Natural killer cell (primary cell): ENCODE measurements at regions of chr19 and their contacts with region 1.

Region 1: GRCh38 chr19:52853880-52854279 is 3.5 kb downstream of the ZNF468 start:
- DNase-seq: no peak
- ATAC-seq: no peak
- H3K4me3 ChIP-seq: no peak overlapping the region
- H3K4me3 Mint-ChIP-seq: no peak overlapping the region
- H3K27ac ChIP-seq: no peak overlapping the region
- H3K27ac Mint-ChIP-seq: no peak overlapping the region
- H3K4me1 ChIP-seq: peaks cover 18% of the 10 kb centered on the region
- H3K4me1 Mint-ChIP-seq: peaks cover 29 to 32% of the 10 kb centered on the region in 2 donors
- H3K27me3 ChIP-seq: no peaks in the 10 kb centered on the region
- H3K27me3 Mint-ChIP-seq: no peaks in the 10 kb centered on the region
- CTCF ChIP-seq: no peak

Region 2: GRCh38 chr19:52734893-52735661 is 118.8 kb before region 1 on chr19 and contains the start of gene ZNF611:
- intact Hi-C with region 1: loop called (anchors 2 kb)
- DNase-seq: peak; percentile 99 to 100
- ATAC-seq: peak; percentile 95 to 99 (median 98)
- H3K4me3 ChIP-seq: peak within 1 kb of the TSS; percentile 92
- H3K4me3 Mint-ChIP-seq: peak within 1 kb of the TSS; percentile 91
- H3K27ac ChIP-seq: peak within 1 kb of the TSS; percentile 88
- H3K27ac Mint-ChIP-seq: peak within 1 kb of the TSS; percentile 68 to 81
- H3K4me1 ChIP-seq: peaks cover 21% of the 10 kb centered on the region
- H3K4me1 Mint-ChIP-seq: peaks cover 21 to 22% of the 10 kb centered on the region in 2 donors
- H3K27me3 ChIP-seq: no peaks in the 10 kb centered on the region
- H3K27me3 Mint-ChIP-seq: no peaks in the 10 kb centered on the region
- CTCF ChIP-seq: peak; percentile 68
- total RNA-seq, gene ZNF611: 41.2 to 58.0 (median 44.2) TPM

Region 3: GRCh38 chr19:52786457-52787359 is 67.2 kb before region 1 on chr19 and contains the start of gene ZNF600:
- intact Hi-C with region 1: loop called (anchors 10 kb)
- DNase-seq: peak; percentile 81
- ATAC-seq: peak; percentile 97 to 98 (median 97)
- H3K4me3 ChIP-seq: peak within 1 kb of the TSS; percentile 88
- H3K4me3 Mint-ChIP-seq: peak within 1 kb of the TSS; percentile 92
- H3K27ac ChIP-seq: peak within 1 kb of the TSS; percentile 70
- H3K27ac Mint-ChIP-seq: peak within 1 kb of the TSS; percentile 57 to 88
- H3K4me1 ChIP-seq: peaks cover 50% of the 10 kb centered on the region
- H3K4me1 Mint-ChIP-seq: peaks cover 53 to 58% of the 10 kb centered on the region in 2 donors
- H3K27me3 ChIP-seq: no peaks in the 10 kb centered on the region
- H3K27me3 Mint-ChIP-seq: no peaks in the 10 kb centered on the region
- CTCF ChIP-seq: no peak
- total RNA-seq, gene ZNF600: 28.8 to 157 (median 73.1) TPM

Region 4: DNA sequence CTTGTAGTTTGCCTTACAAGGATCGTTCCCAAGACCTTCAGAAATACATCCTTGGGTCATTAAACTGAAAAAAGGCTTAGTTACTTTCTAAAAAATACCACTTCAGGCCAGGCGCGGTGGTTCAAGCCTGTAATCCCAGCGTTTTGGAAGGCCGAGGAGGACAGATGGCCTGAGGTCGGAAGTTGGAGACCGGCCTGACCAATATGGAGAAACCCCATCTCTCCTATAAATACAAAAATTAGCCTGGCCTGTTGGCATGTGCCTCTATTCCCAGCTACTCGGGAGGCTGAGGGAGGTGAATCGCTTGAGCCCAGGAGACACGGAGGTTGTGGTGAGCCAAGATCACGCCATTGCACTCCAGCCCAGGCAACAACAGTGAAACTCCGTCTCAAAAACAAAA is 30.2 kb before region 1 on chr19:
- intact Hi-C with region 1: loop called (anchors 1 kb)
- DNase-seq: no peak
- ATAC-seq: no peak
- H3K4me3 ChIP-seq: no peak overlapping the region
- H3K4me3 Mint-ChIP-seq: no peak overlapping the region
- H3K27ac ChIP-seq: no peak overlapping the region
- H3K27ac Mint-ChIP-seq: no peak overlapping the region
- H3K4me1 ChIP-seq: peaks cover 7% of the 10 kb centered on the region
- H3K4me1 Mint-ChIP-seq: peaks cover 13 to 17% of the 10 kb centered on the region in 2 donors
- H3K27me3 ChIP-seq: no peaks in the 10 kb centered on the region
- H3K27me3 Mint-ChIP-seq: no peaks in the 10 kb centered on the region
- CTCF ChIP-seq: no peak

Region 5: GRCh38 chr19:52897144-52897935 is 43.5 kb after region 1 on chr19 and contains the start of gene ZNF320:
- intact Hi-C with region 1: loop called (anchors 1 kb)
- DNase-seq: peak; percentile 94 to 95
- ATAC-seq: peak; percentile 99 to 100 (median 100)
- H3K4me3 ChIP-seq: peak within 1 kb of the TSS; percentile 80
- H3K4me3 Mint-ChIP-seq: peak within 1 kb of the TSS; percentile 93
- H3K27ac ChIP-seq: peak within 1 kb of the TSS; percentile 74
- H3K27ac Mint-ChIP-seq: peak within 1 kb of the TSS; percentile 85 to 90
- H3K4me1 ChIP-seq: peaks cover 18% of the 10 kb centered on the region
- H3K4me1 Mint-ChIP-seq: peaks cover 22 to 25% of the 10 kb centered on the region in 2 donors
- H3K27me3 ChIP-seq: no peaks in the 10 kb centered on the region
- H3K27me3 Mint-ChIP-seq: no peaks in the 10 kb centered on the region
- CTCF ChIP-seq: no peak
- total RNA-seq, gene ZNF320: 10.3 to 14.0 (median 11.9) TPM

Region 6: GRCh38 chr19:52993323-52994178 is 139.7 kb after region 1 on chr19:
- intact Hi-C with region 1: no loop called
- DNase-seq: peak; percentile 74 to 78
- ATAC-seq: peak; percentile 76 to 96 (median 92)
- H3K4me3 ChIP-seq: peak overlapping the region; percentile 51
- H3K4me3 Mint-ChIP-seq: peak overlapping the region; percentile 78
- H3K27ac ChIP-seq: no peak overlapping the region
- H3K27ac Mint-ChIP-seq: peak overlapping the region in 1 of 2 donors; percentile 24
- H3K4me1 ChIP-seq: peaks cover 16% of the 10 kb centered on the region
- H3K4me1 Mint-ChIP-seq: peaks cover 8 to 14% of the 10 kb centered on the region in 2 donors
- H3K27me3 ChIP-seq: peaks cover 3% of the 10 kb centered on the region
- H3K27me3 Mint-ChIP-seq: peaks cover 6 to 18% of the 10 kb centered on the region in 2 donors
- CTCF ChIP-seq: peak; percentile 74